PC-3 (cell line): ENCODE measurements at regions of chr17 and their contacts with region 1.

Region 1: DNA sequence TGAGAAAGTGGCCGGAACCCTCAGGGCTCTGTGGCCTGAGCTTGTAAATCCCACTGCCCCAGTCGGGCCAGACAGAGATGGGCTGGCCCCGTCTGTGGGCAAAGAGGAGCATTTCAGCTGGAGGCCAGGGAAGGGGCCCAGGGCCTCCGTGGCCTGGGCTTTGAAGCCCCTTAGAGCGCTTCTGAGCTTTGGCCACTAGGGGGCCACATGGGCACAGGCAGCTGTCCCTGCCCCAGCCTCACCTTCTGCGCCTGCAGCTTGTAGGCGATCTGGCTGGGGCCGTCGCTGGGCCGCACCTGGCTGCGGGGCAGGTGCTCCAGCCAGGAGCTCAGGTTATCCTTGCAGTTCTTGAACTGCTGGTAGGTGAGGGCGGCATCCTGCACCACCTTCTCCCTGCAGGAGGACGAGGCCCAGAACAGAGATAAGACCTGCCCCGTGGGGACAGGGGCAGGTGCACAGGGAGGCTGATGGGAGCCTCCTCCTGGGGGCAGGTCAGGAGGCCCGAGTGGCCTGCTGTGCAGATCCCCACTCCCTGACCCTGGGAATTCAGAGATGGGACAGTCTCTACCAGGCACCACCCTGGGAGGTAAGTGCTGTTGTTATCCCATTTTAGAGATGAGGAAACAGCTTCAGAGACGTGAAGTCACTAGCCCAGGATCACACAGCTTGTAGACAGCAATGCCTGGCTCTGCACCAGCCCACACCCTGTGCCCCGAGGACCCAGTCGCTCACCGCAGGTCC is 12.8 kb downstream of the EVPL start:
- DNase-seq: peak; percentile 79
- ATAC-seq: peak; percentile 95
- H3K4me3 ChIP-seq: no peak overlapping the region
- H3K27ac ChIP-seq: no peak overlapping the region
- H3K4me1 ChIP-seq: no peaks in the 10 kb centered on the region
- H3K27me3 ChIP-seq: no peaks in the 10 kb centered on the region
- CTCF ChIP-seq: peak; percentile 98

Region 2: DNA sequence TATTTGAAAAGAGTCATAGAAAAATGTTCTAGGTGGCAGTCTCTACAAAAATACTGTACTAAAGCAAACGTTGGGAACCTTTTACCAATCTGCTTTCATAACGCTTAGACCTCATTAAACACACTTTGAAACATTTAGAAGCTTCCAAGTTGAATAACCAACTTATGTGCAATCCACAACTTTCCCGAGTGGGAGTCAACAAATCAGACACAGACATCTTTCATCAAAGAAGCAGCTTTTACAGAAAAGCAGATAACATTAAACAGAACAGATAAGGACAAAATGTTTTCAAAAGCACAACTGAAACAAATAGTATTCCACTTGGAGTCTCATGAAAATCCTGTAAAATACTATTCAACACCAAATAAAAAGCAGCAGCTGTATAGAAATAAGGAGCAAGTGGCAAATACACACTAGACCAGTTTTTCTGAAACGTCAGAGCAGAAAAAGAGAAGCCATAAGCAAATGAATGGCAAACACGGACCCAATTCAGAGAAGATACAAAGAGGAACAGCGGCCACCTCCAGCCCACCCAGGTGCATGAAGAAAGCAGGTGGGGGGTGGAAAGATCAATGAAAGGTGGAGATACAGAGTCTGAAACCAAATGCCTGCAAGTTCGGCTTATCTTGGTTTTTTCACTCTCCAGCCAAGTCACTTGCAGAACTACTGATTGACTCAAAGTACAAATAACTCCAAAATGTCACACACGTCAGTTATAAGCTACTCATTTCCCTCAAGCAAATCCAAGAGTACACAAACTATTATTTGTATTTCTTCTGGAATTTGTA is 55.1 kb before region 1 on chr17:
- CTCF ChIA-PET with region 1: no interaction called
- POLR2A ChIA-PET with region 1: no interaction called
- intact Hi-C with region 1: no loop called
- DNase-seq: peak; percentile 79
- ATAC-seq: peak; percentile 94
- H3K4me3 ChIP-seq: peak overlapping the region; percentile 36; the same call in 1 of the 2 replicates
- H3K27ac ChIP-seq: peak overlapping the region; percentile 78
- H3K4me1 ChIP-seq: peaks cover 21% of the 10 kb centered on the region
- H3K27me3 ChIP-seq: no peaks in the 10 kb centered on the region
- CTCF ChIP-seq: no peak

Region 3: DNA sequence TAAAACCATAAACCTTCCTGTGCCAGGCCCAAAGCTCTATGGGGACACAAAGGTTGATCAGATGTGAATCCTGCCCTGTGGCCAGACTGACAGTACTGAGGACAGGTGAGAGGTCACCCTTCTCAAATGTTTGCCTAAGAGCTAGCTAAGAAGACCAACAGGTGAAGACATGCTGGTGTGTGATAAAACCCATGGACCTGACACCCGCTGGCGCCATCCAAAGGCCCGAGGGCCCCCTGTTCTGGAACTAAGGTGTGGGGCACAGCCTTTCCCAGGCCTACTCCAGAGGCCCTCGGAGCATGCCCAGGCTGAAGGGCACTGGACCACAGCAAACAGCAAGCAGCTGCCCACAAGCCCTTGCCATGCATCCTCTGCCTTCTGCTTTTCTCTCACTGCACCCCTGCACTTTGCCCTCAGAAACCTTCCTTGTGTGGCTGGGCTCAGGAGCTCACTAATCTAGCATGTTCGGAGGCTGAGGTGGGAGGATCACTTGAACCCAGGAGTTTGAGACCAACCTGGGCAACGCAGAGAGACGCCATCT is 18.9 kb before region 1 on chr17:
- CTCF ChIA-PET with region 1: no interaction called
- POLR2A ChIA-PET with region 1: no interaction called
- intact Hi-C with region 1: no loop called
- DNase-seq: no peak
- ATAC-seq: no peak
- H3K4me3 ChIP-seq: no peak overlapping the region
- H3K27ac ChIP-seq: peak overlapping the region; percentile 97
- H3K4me1 ChIP-seq: peaks cover 32% of the 10 kb centered on the region
- H3K27me3 ChIP-seq: no peaks in the 10 kb centered on the region
- CTCF ChIP-seq: no peak

Region 4: DNA sequence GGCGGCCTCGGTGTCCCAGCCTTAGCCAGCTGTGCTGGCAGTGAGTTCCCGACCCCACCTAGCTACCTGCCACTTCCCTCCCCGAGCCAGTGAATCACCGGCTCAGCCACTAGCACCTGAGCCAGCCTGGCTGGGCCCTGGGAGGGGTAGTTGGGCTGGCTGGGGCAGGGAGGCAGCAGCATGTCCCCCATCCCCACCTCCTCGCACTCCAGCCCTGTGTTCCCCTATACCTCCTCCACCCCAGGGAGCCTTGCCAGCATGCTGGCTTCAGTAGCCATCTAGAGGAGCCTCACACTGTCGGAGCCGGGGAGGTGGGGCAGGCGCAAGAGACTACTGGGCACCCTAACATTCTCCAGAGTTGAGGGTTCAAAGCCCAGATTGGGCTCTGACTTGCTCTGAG is 10.0 kb after region 1 on chr17:
- CTCF ChIA-PET with region 1: no interaction called
- POLR2A ChIA-PET with region 1: no interaction called
- intact Hi-C with region 1: no loop called
- DNase-seq: no peak
- ATAC-seq: no peak
- H3K4me3 ChIP-seq: no peak overlapping the region
- H3K27ac ChIP-seq: no peak overlapping the region
- H3K4me1 ChIP-seq: peaks cover 21% of the 10 kb centered on the region
- H3K27me3 ChIP-seq: no peaks in the 10 kb centered on the region
- CTCF ChIP-seq: no peak

Region 5: DNA sequence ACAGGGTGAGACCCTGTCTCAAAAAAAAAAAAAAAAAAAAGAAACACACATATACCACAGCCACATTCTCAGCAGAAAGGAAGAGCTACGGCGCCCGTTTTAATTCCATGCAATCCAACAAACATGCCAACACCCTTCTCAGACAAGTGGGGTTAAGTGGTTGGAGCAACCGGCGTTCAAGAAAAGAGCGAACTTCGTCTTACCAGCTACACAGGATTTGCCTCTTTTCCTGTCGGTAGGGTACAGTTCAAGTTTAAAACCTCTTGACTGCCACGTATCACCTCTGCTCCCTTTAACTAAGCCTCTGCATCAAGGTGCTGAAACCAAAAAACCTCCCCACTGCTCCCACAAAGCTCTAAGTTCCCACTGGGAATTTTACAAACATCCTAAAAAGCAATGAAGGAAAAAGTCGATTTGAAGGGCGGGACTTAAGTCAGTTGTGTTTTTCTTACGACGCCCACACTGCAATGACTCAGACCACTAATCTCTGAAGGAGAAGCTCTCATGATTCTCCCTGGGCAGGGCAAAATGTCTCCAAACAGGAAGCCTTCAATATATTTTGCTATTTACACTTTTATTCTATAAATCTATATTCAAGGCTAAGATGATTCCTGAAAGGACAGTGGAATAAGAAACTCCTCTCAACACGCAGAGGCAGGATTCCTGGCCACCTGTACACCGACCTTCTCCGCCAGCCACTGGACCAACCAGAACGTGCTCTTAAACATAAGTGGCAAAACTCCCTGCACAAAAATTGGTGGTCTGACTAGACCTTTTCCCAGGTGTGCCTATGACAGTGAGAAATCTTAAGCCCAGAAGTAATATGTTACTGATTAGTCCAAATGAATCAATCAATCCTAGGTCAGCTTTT is 39.1 kb after region 1 on chr17:
- CTCF ChIA-PET with region 1: interaction called, 3 read pairs
- POLR2A ChIA-PET with region 1: no interaction called
- intact Hi-C with region 1: loop called (anchors 2 kb)
- DNase-seq: peak; percentile 75
- ATAC-seq: peak; percentile 51
- H3K4me3 ChIP-seq: peak overlapping the region; percentile 37
- H3K27ac ChIP-seq: peak overlapping the region; percentile 83
- H3K4me1 ChIP-seq: peaks cover 38% of the 10 kb centered on the region
- H3K27me3 ChIP-seq: no peaks in the 10 kb centered on the region
- CTCF ChIP-seq: no peak

Region 6: DNA sequence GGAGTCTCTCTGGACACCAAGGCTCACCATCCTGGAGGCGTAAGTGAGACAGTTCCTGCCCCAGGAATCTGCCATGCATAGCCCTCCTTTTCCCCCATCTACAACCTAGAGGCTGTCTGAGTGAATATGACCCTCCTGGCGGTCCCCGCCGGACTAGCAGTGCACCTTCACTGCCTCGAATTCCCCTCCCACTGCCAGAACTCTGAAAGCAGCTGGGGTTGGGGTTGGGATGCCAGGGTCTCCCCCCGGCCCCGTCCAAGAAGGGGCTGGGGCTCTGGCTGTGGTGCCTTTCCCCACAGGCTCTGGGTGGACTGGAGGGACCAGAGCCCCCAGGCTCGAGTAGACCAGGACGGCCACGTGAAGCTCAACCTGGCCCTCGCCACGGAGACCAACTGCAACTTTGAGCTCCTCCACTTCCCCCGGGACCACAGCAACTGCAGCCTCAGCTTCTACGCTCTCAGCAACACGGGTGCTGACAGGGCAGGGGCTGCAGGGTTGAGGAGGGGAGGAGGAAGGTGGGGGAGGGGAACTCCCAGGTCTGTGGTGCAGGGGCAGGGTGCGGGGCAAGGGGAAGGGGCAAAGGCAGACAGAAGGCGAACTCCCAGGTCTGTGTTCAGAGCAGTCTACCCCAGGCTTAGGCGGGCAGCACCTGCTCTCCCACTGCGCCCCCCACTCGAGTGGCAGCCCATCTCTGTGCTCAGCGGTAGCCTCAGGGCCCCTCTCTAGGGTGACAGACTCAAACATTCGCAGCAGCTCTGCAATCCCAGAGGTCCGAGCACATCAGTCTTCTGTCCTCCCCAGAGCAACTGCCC is 65.8 kb after region 1 on chr17:
- CTCF ChIA-PET with region 1: no interaction called
- POLR2A ChIA-PET with region 1: no interaction called
- intact Hi-C with region 1: no loop called
- DNase-seq: no peak
- ATAC-seq: peak; percentile 11
- H3K4me3 ChIP-seq: no peak overlapping the region
- H3K27ac ChIP-seq: no peak overlapping the region
- H3K4me1 ChIP-seq: no peaks in the 10 kb centered on the region
- H3K27me3 ChIP-seq: peaks cover 51% of the 10 kb centered on the region
- CTCF ChIP-seq: no peak; the same call in 1 of the 2 replicates

Region 7: GRCh38 chr17:76091526-76092285 is 77.4 kb after region 1 on chr17:
- CTCF ChIA-PET with region 1: no interaction called
- POLR2A ChIA-PET with region 1: interaction called, 14 read pairs
- intact Hi-C with region 1: no loop called
- DNase-seq: no peak
- ATAC-seq: no peak
- H3K4me3 ChIP-seq: no peak overlapping the region
- H3K27ac ChIP-seq: no peak overlapping the region
- H3K4me1 ChIP-seq: no peaks in the 10 kb centered on the region
- H3K27me3 ChIP-seq: no peaks in the 10 kb centered on the region
- CTCF ChIP-seq: no peak

Region 8: DNA sequence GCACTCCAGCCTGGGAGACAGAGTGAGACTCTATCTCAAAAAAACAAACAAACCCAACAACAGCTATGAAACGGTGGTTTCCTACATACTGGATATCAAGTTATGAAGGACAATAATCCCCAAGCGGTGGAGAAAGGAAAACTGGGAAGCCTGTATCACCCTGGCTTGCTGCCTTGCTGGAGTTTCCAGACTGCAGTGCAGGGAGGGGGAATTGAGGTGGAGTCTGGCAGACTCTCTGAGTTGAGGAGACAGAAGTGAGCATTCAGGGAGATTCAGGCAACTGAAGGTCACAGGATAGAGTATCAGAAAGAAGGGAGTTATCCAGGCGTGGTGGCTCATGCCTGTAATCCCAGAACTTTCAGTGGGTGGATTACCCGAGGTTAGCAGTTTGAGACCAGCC is 281.8 kb after region 1 on chr17:
- CTCF ChIA-PET with region 1: interaction called, 3 read pairs
- POLR2A ChIA-PET with region 1: no interaction called
- intact Hi-C with region 1: loop called (anchors 5 kb)
- DNase-seq: no peak
- ATAC-seq: no peak
- H3K4me3 ChIP-seq: no peak overlapping the region
- H3K27ac ChIP-seq: no peak overlapping the region
- H3K4me1 ChIP-seq: no peaks in the 10 kb centered on the region
- H3K27me3 ChIP-seq: no peaks in the 10 kb centered on the region
- CTCF ChIP-seq: no peak